Transverse colon (tissue), 4 donors: ENCODE measurements at regions of chr9 and their contacts with region 1.

Region 1: GRCh38 chr9:120755827-120756434 is 37.3 kb downstream of the FBXW2 start:
- DNase-seq: peak; percentile 56
- H3K4me3 ChIP-seq: no peak overlapping the region
- H3K27ac ChIP-seq: no peak overlapping the region
- H3K4me1 ChIP-seq: no peaks in the 10 kb centered on the region
- H3K27me3 ChIP-seq: no peaks in the 10 kb centered on the region
- CTCF ChIP-seq: peak; percentile 86 to 91 (median 90)
- EP300 ChIP-seq: no peak
- POLR2A ChIP-seq: no peak

Region 2: GRCh38 chr9:120710110-120710981 is 45.6 kb before region 1 on chr9:
- in situ Hi-C with region 1: no loop called
- intact Hi-C with region 1: no loop called
- DNase-seq: no peak
- H3K4me3 ChIP-seq: peak overlapping the region in 3 of 4 donors; percentile 5 to 40 (median 18)
- H3K27ac ChIP-seq: peak overlapping the region; percentile 64 to 84 (median 76)
- H3K4me1 ChIP-seq: peaks cover 14 to 47% (median 27%) of the 10 kb centered on the region in 4 donors
- H3K27me3 ChIP-seq: no peaks in the 10 kb centered on the region
- CTCF ChIP-seq: no peak
- EP300 ChIP-seq: no peak
- POLR2A ChIP-seq: no peak

Region 3: DNA sequence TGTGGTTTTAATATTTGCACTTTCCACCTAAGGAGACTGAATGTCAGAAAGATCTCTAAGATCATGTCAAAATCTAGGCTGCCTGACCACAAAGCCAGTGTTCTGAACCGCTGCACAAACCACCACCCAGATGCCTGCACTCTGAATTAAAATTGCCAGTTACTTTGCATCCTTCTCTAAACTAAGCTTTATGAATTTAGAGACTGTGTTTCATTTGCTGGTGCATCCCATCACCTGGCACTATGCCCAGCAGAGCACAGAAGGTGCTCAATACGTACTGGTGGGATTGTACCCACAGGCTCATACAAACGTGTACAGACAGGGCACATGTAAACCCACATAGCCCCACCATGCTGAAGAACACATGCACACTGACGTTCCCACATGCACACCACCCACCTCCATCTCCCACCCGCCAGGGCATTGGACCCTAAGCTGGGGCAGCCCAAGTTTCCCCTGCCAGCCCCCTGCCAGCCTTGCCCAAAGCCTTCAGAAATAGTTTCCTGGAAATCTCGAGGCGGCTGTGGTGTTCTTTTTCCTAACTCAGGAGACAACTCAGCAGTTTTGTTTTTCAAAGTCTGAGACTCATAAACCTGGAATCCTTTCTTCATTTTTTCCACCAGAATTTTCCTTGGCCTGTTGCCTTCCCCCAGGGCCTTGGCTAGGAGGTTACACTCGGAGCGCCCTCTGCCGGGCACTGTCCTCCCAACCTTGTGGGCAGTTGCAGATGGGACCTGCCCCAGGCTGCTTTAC is 180.3 kb after region 1 on chr9:
- in situ Hi-C with region 1: loop called (anchors 10 to 25 kb)
- intact Hi-C with region 1: no loop called
- DNase-seq: peak; percentile 96
- H3K4me3 ChIP-seq: no peak overlapping the region
- H3K27ac ChIP-seq: peak overlapping the region; percentile 75 to 91 (median 86)
- H3K4me1 ChIP-seq: peaks cover 24 to 51% (median 28%) of the 10 kb centered on the region in 4 donors
- H3K27me3 ChIP-seq: no peaks in the 10 kb centered on the region
- CTCF ChIP-seq: peak; percentile 87 to 92 (median 89)
- EP300 ChIP-seq: no peak
- POLR2A ChIP-seq: no peak

Region 4: DNA sequence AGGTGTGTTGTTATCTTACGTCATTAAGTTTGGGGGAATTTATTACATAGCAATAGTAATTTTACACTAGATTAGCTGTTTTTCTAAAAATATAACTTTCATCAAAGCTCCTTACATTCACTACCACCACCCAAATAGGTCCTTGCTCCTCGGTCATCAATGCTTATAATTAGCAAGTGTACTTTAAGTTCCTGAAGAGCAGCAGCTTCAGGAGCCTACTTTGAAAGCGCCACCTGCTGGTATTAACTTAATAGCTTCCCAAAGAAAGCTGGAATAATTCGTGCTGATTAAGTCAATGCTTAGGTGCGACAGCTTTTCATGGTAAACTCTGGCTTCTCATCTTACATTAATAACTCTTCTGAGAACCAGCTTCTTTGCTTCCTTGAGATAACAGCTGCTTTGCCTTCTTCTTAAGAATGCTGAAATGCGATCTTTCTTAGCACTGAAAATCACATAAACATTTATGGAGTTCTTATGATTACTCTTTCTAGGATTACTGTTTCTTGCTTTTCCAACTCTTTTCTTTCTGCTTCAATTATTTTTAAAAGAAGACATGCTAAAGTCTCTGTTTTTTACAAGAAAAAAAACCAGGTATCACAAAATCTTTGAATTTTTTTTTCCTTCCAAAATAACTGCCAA is 304.2 kb after region 1 on chr9:
- in situ Hi-C with region 1: loop called (anchors 10 to 25 kb)
- intact Hi-C with region 1: loop called (anchors 10 kb)
- DNase-seq: no peak
- H3K4me3 ChIP-seq: no peak overlapping the region
- H3K27ac ChIP-seq: no peak overlapping the region
- H3K4me1 ChIP-seq: peaks cover 0 to 3% (median 0%) of the 10 kb centered on the region in 4 donors
- H3K27me3 ChIP-seq: no peaks in the 10 kb centered on the region
- CTCF ChIP-seq: peak; percentile 57 to 69 (median 69)
- EP300 ChIP-seq: no peak
- POLR2A ChIP-seq: no peak

Region 5: GRCh38 chr9:121074635-121075385 is 318.9 kb after region 1 on chr9 and contains the start of gene CNTRL:
- in situ Hi-C with region 1: loop called in 1 of 4 experiments (anchors 25 kb)
- intact Hi-C with region 1: no loop called
- DNase-seq: peak; percentile 88
- H3K4me3 ChIP-seq: peak within 1 kb of the TSS; percentile 45 to 86 (median 66)
- H3K27ac ChIP-seq: peak within 1 kb of the TSS; percentile 83 to 96 (median 84)
- H3K4me1 ChIP-seq: peaks cover 4 to 22% (median 10%) of the 10 kb centered on the region in 4 donors
- H3K27me3 ChIP-seq: no peaks in the 10 kb centered on the region
- CTCF ChIP-seq: peak in 1 of 5 experiments; percentile 18
- EP300 ChIP-seq: no peak
- POLR2A ChIP-seq: peak; percentile 54
- total RNA-seq, gene CNTRL: 6.0 to 21.3 (median 11.2) TPM